B cell (primary cell): ENCODE measurements at regions of chrX and their contacts with region 1.

Region 1: GRCh38 chrX:112731793-112732575 is 52.2 kb upstream of the LHFPL1 start:
- DNase-seq: no peak
- ATAC-seq: no peak
- H3K4me3 ChIP-seq: no peak overlapping the region
- H3K4me3 Mint-ChIP-seq: no peak overlapping the region
- H3K27ac ChIP-seq: no peak overlapping the region
- H3K27ac Mint-ChIP-seq: no peak overlapping the region
- H3K4me1 ChIP-seq: peaks cover 6 to 9% of the 10 kb centered on the region in 2 donors
- H3K4me1 Mint-ChIP-seq: peaks cover 13% of the 10 kb centered on the region
- H3K27me3 ChIP-seq: no peaks in the 10 kb centered on the region
- H3K27me3 Mint-ChIP-seq: no peaks in the 10 kb centered on the region
- CTCF ChIP-seq: no peak

Region 2: GRCh38 chrX:111869639-111870034 is 862.3 kb before region 1 on chrX:
- CTCF ChIA-PET with region 1: no interaction called
- POLR2A ChIA-PET with region 1: no interaction called
- intact Hi-C with region 1: loop called (anchors 10 kb)
- DNase-seq: peak; percentile 11
- ATAC-seq: peak; percentile 21
- H3K4me3 ChIP-seq: no peak overlapping the region
- H3K4me3 Mint-ChIP-seq: no peak overlapping the region
- H3K27ac ChIP-seq: no peak overlapping the region
- H3K27ac Mint-ChIP-seq: no peak overlapping the region
- H3K4me1 ChIP-seq: no peaks in the 10 kb centered on the region
- H3K4me1 Mint-ChIP-seq: peaks cover 5% of the 10 kb centered on the region
- H3K27me3 ChIP-seq: peaks cover 0 to 3% (median 0%) of the 10 kb centered on the region in 4 experiments
- H3K27me3 Mint-ChIP-seq: no peaks in the 10 kb centered on the region
- CTCF ChIP-seq: peak; percentile 56